Heart right ventricle (tissue), 16 donors: ENCODE measurements at regions of chr1 and their contacts with region 1.

Region 1: DNA sequence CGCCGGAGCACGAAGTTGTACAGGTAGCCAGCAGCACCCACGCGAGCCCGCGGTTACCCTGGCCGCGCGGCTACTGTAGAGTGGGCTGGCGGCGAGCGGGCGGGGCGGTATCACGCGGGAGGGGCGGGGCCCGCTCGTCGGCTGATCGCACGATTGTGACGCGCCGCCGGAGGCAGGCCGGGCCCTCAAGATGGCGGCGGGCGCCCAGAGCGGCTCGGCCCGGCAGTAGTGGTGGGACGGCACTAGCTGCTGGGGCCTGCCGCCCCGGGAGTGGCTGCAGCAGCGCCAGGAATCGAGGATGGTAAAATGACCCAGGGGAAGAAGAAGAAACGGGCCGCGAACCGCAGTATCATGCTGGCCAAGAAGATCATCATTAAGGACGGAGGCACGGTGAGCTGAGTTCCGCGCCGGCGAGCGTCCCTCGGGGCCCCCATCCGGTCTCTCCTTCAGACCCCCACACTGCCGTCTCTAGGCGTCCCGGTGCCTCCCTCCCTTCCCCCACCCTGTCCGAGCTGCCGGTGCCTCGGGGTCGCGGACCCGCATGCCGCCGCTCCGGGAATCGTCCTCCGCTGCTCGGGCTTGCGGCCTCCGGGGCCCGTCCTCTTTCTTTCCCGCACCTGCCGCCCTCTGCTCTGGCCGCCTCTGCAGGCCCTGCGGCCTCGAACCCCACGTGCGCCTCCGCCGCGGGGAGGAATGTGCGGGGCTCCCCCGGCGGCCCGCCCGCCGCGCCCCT is 68.3 kb downstream of the SLC35A3 start:
- DNase-seq: peak; percentile 89 to 90
- ATAC-seq: peak; percentile 99 to 100 (median 99)
- H3K4me3 ChIP-seq: peak overlapping the region; percentile 74 to 94 (median 86)
- H3K27ac ChIP-seq: peak overlapping the region; percentile 91 to 98 (median 96)
- H3K4me1 ChIP-seq: peaks cover 0 to 57% (median 32%) of the 10 kb centered on the region in 9 donors
- H3K27me3 ChIP-seq: no peaks in the 10 kb centered on the region
- CTCF ChIP-seq: no peak

Region 2: DNA sequence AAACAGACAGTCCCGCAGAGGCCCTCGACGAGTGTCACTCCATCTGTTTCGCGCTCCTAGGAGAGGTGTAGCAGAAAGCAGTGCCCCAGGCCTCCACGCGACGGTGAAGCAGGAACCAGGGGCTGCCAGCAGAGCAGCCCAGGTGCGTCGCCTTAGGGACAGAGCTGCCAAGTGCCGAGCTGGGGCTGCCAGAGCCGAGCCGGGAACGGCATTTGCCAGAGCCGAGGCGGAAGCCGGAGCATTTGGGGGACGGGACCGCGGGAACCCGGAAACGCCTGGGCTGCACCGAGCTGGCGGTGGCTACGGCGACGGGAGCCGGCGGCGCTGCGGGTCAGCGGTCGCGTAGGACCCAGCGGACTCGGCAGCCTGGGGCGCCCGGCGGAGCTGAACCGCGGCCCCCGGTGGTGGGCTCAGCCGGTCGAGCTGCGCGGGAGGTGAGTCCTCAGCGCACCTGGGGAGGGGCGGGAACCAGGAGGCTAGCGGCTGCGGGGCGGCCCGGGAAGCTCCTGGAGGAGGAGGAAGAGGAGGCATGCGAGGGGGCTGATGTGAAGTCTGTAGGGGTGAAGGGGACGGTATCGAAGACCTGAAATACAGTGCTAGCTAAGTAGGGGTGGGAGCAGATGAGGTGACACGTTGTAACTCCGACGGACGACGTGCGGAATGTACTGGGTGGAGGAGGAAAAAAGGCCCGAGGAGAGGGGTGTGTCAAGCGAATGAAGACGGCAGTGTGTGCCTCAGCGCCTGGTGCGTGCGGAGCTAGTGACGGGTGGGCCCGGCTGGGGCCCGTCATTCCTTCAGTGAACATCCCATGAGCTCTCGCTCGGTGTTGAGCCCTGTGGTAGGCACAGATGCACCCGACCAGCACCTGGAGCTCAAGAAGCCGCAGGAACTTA is 68.1 kb before region 1 on chr1 and contains the start of gene SLC35A3:
- intact Hi-C with region 1: loop called in 3 of 10 experiments (anchors 5 kb)
- DNase-seq: peak; percentile 72 to 82
- ATAC-seq: peak; percentile 96 to 99 (median 97)
- H3K4me3 ChIP-seq: peak within 1 kb of the TSS; percentile 67 to 98 (median 86)
- H3K27ac ChIP-seq: peak within 1 kb of the TSS in 9 of 10 donors; percentile 51 to 91 (median 74)
- H3K4me1 ChIP-seq: peaks cover 0 to 24% (median 11%) of the 10 kb centered on the region in 9 donors
- H3K27me3 ChIP-seq: no peaks in the 10 kb centered on the region
- CTCF ChIP-seq: peak in 1 of 9 donors; percentile 6
- total RNA-seq, gene SLC35A3: 5.3 to 9.4 (median 8.1) TPM

Region 3: DNA sequence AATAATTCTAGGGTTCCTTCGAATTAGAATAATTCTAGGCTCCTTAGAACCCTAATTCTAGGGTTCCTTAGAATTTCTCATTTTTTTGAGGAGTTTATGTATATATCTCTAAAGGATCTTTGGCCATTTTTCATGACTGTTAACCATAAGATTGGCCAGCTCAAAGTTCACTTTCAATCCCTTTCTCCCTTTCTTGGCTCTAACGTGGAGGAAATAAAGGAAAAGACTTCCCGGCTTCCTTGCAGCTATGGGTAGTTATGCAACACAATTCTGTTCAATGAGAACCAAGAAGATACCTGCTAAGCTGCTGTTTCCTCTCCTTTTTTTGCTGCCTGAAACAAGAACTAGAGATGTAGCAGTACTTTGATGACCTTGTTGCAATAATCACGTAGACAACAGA is 41.1 kb before region 1 on chr1:
- intact Hi-C with region 1: no loop called
- DNase-seq: no peak
- ATAC-seq: no peak
- H3K4me3 ChIP-seq: no peak overlapping the region
- H3K27ac ChIP-seq: no peak overlapping the region
- H3K4me1 ChIP-seq: no peaks in the 10 kb centered on the region
- H3K27me3 ChIP-seq: no peaks in the 10 kb centered on the region
- CTCF ChIP-seq: no peak

Region 4: DNA sequence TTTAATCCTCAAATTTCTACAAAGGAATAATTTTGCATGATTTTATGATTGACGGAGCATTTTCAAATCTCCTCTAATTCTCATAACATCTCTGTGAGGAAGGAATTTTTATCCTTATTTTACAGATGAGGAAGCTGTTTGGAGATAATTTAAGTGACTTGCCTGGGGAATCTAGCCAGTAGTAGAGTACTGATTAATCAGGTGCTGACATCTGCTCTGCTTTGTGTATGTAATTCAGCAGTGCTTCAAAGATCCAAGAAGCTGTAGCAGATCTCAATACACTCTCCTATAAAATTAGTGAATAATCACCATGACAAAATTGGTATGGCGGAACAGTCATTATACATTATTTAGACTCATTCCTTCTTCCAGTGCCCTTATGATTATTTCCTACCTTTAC is 941.5 kb after region 1 on chr1:
- intact Hi-C with region 1: no loop called
- DNase-seq: no peak
- ATAC-seq: no peak
- H3K4me3 ChIP-seq: no peak overlapping the region
- H3K27ac ChIP-seq: no peak overlapping the region
- H3K4me1 ChIP-seq: peaks cover 0 to 3% (median 0%) of the 10 kb centered on the region in 9 donors
- H3K27me3 ChIP-seq: no peaks in the 10 kb centered on the region
- CTCF ChIP-seq: no peak